Endothelial cell of umbilical vein (primary cell): ENCODE measurements at regions of chr1 and their contacts with region 1.

Region 1: GRCh38 chr1:178133239-178133989 is 39.5 kb downstream of the RASAL2 start:
- DNase-seq: no peak
- H3K4me3 ChIP-seq: no peak overlapping the region
- H3K27ac ChIP-seq: no peak overlapping the region
- H3K4me1 ChIP-seq: peaks cover 10% of the 10 kb centered on the region
- H3K27me3 ChIP-seq: no peaks in the 10 kb centered on the region
- CTCF ChIP-seq: no peak
- POLR2A ChIP-seq: no peak

Region 2: DNA sequence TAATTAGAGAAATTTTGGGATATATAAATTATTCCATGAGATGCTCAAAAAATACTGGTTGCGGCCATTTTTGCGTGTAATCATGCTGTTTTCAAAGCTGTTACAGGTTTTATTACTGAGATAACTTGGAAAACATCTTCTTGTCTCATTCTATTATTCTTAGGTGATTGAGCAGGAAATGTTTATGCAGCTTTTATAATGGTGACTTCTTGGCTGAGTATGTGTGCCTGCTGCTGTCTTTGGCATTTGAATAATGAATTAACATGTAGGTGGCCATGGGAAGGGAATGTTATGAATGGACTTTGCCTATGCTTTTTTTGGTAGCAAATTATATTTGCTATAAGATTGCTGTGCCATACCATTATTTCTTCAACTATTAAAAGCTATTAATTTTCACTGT is 13.0 kb after region 1 on chr1:
- CTCF ChIA-PET with region 1: no interaction called
- POLR2A ChIA-PET with region 1: no interaction called
- dilution Hi-C with region 1: no loop called
- intact Hi-C with region 1: loop called (anchors 2 kb)
- DNase-seq: peak; percentile 45
- H3K4me3 ChIP-seq: no peak overlapping the region
- H3K27ac ChIP-seq: no peak overlapping the region
- H3K4me1 ChIP-seq: no peaks in the 10 kb centered on the region
- H3K27me3 ChIP-seq: no peaks in the 10 kb centered on the region
- CTCF ChIP-seq: no peak
- POLR2A ChIP-seq: no peak